Mammary epithelial cell (primary cell): ENCODE measurements at regions of chr2 and their contacts with region 1.

Region 1: DNA sequence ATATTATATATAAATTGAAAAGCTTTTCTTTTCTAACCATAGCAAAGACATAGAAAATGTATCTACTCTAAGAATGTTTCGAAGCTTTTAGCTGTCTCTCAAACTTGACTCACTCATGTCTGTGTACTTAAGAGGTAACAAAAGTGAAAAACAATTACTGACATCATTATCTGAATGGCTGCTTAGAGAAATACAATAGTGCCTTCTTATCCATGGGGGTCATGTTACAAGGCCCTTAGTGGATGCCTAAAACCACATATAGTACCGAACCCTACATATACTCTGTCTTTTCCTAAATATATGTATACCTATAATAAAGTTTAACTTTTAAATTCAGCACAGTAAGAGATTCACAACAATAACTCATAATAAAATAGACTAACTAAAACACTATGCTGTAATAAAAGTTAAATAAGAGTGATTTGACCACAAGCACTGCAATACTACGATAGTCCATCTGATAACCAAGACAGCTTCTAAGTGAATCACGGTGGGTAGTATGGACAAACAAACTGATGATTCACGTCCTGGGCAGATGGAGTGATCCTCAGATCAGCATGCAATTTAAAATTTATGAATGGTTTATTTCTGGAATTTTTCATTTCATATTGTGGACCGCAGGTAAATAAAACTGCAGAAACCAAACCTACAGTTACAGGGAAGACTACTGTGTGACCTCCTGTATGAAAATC is 246.2 kb downstream of the XIRP2 start:
- DNase-seq: peak; percentile 84
- H3K4me3 ChIP-seq: no peak overlapping the region
- H3K27ac ChIP-seq: peak overlapping the region; percentile 69
- H3K4me1 ChIP-seq: peaks cover 29% of the 10 kb centered on the region
- H3K27me3 ChIP-seq: no peaks in the 10 kb centered on the region
- CTCF ChIP-seq: no peak

Region 2: GRCh38 chr2:167240671-167241070 is 106.1 kb after region 1 on chr2:
- CTCF ChIA-PET with region 1: no interaction called
- dilution Hi-C with region 1: no loop called
- in situ Hi-C with region 1: no loop called
- intact Hi-C with region 1: no loop called
- DNase-seq: no peak
- H3K4me3 ChIP-seq: no peak overlapping the region
- H3K27ac ChIP-seq: no peak overlapping the region
- H3K4me1 ChIP-seq: no peaks in the 10 kb centered on the region
- H3K27me3 ChIP-seq: peaks cover 10% of the 10 kb centered on the region
- CTCF ChIP-seq: no peak

Region 3: GRCh38 chr2:167292430-167293171 is 158.1 kb after region 1 on chr2:
- CTCF ChIA-PET with region 1: no interaction called
- dilution Hi-C with region 1: no loop called
- in situ Hi-C with region 1: no loop called
- intact Hi-C with region 1: loop called (anchors 10 kb)
- DNase-seq: peak; percentile 90
- H3K4me3 ChIP-seq: peak within 1 kb of the TSS; percentile 62 to 82 (median 71)
- H3K27ac ChIP-seq: no peak within 1 kb of the TSS
- H3K4me1 ChIP-seq: peaks cover 15% of the 10 kb centered on the region
- H3K27me3 ChIP-seq: peaks cover 10% of the 10 kb centered on the region
- CTCF ChIP-seq: peak in 1 of 2 donors; percentile 43